Endothelial cell of umbilical vein (primary cell): ENCODE measurements at regions of chr2 and their contacts with region 1.

Region 1: DNA sequence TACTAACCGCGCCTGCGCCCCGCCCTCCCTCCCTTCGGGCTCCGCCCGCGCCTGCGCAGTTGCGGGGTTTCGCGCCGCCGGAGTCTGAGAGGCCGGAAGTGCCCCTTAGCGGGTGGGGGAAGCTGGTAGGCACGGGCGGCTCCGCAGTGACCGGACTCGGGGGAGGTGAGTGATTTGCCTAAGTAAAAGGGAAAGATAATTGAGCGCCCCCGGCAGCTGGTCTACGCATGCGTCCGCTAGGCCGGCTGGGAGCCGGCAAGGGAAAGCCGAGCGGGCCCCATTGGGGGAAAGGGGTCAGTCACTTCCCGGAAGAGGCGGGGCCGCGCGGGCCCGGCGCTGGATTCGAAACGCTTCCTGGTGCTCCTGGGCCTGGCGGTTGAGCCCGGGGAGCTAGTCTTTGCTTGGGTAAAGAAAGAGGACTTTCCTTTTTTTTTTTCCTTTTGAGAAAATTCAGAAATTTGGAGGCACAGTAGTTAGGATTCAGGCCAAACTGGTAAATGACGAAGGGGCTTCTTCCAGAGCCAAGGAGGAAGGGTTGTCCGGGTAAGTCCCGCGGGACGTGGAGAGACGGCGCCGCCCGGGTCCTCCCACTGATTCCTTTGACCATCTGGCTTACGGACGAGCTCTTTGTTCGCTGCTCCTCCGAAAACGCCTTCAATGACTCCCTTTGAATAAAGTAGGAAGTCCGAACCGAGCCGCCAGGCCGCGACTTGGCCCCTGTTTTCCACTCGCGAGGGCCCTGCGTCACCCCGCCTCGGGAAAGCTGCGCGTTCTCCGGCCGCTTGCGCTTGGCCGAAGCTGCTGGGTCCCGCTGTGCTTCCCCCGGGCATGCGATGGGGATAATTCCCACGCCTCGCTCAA is at the starts of genes GEN1 and SMC6:
- DNase-seq: peak; percentile 94
- H3K4me3 ChIP-seq: peak within 1 kb of the TSS; percentile 74 to 96 (median 81)
- H3K27ac ChIP-seq: peak within 1 kb of the TSS; percentile 88
- H3K4me1 ChIP-seq: peaks cover 47% of the 10 kb centered on the region
- H3K27me3 ChIP-seq: no peaks in the 10 kb centered on the region
- CTCF ChIP-seq: no peak
- POLR2A ChIP-seq: peak; percentile 12
- total RNA-seq, gene GEN1: 20.8 and 29.6 TPM in 2 replicates
- total RNA-seq, gene SMC6: 35.4 and 38.3 TPM in 2 replicates

Region 2: GRCh38 chr2:17719562-17720371 is 34.3 kb before region 1 on chr2:
- CTCF ChIA-PET with region 1: interaction called, 11 read pairs
- POLR2A ChIA-PET with region 1: interaction called, 5 read pairs
- dilution Hi-C with region 1: no loop called
- intact Hi-C with region 1: loop called (anchors 1 kb)
- DNase-seq: peak; percentile 79
- H3K4me3 ChIP-seq: no peak overlapping the region
- H3K27ac ChIP-seq: no peak overlapping the region
- H3K4me1 ChIP-seq: no peaks in the 10 kb centered on the region
- H3K27me3 ChIP-seq: no peaks in the 10 kb centered on the region
- CTCF ChIP-seq: peak; percentile 46 to 49
- POLR2A ChIP-seq: no peak

Region 3: DNA sequence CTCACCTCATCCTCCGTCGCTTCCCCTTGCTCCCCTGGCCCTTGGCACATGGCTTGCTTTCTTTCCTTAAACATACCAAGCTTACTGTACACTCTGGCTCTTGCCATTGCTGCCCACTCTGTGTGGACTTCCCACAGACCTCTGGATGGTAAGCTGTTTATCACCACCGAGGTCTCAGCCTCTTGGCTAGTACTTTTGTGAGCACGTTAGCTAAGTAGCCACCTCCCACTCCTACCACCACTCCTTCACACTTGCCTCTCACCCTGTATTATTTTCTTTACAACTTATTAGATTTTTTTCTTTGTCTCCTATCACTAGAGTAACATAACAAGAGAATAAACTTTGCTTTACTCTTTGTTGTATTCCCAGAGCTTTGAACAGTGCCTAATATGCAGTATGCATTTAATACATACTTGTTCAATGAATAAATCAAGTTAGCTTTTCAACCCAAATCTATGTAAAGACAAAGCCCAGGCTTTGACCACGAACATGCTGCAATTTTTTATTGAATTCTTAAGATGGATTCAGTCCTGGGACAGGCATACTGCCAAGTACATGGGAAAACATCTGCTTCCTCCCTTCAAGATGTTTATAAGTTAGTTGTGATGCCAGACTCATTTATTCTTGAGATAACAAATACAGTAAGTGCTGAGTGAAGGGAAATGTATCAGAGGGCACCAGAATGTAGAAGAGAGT is 37.2 kb after region 1 on chr2:
- CTCF ChIA-PET with region 1: no interaction called
- POLR2A ChIA-PET with region 1: no interaction called
- dilution Hi-C with region 1: no loop called
- intact Hi-C with region 1: loop called (anchors 1 kb)
- DNase-seq: peak; percentile 97
- H3K4me3 ChIP-seq: no peak overlapping the region
- H3K27ac ChIP-seq: no peak overlapping the region
- H3K4me1 ChIP-seq: no peaks in the 10 kb centered on the region
- H3K27me3 ChIP-seq: peaks cover 3 to 10% of the 10 kb centered on the region in 2 experiments
- CTCF ChIP-seq: no peak
- POLR2A ChIP-seq: no peak

Region 4: GRCh38 chr2:17867133-17867532 is 113.1 kb after region 1 on chr2:
- CTCF ChIA-PET with region 1: no interaction called
- POLR2A ChIA-PET with region 1: no interaction called
- dilution Hi-C with region 1: no loop called
- intact Hi-C with region 1: no loop called
- DNase-seq: no peak
- H3K4me3 ChIP-seq: no peak overlapping the region
- H3K27ac ChIP-seq: no peak overlapping the region
- H3K4me1 ChIP-seq: no peaks in the 10 kb centered on the region
- H3K27me3 ChIP-seq: no peaks in the 10 kb centered on the region
- CTCF ChIP-seq: no peak
- POLR2A ChIP-seq: no peak

Region 5: DNA sequence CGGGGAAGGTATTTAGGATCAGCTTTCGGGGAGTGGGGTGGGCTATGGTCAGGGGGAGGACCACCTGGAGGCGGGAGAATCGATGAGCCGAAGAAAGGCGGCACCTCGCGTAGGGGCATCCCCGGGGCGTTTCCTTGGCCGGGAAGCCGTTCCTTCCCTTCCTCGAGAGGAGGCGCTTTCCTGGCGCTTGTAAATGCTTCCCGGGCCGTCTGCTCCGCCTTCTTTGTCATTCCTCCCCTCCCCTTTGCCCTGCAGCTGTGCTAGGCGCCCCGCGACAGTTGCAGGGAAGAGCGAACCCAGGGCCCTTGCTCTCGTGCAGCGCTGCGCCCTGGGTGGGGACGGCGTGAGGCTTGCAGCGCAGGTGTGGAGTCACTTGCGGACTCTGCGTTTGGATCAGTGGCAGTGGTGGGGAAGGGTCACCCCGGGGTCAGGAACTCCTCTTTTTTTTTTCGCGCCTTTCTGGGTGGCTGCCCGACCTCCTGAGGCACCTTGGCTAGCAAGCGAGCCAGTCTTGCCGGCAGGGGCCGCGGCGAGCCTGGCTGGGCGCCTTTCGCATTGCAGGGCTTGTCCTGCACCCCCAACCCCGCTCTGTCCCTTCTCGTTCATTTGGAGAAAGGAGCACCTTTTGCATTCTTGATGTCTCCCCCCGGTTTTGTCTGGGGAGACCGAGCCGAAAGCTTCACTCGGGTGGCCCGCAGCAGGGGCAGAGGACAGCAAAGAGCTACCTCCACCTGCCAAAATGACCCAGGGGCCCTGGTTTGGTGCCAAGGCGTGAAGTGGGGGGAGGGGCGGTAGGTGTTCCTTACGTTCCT is 125.3 kb after region 1 on chr2:
- CTCF ChIA-PET with region 1: interaction called, 3 read pairs
- POLR2A ChIA-PET with region 1: no interaction called
- dilution Hi-C with region 1: no loop called
- intact Hi-C with region 1: loop called (anchors 2 kb)
- DNase-seq: peak; percentile 7
- H3K4me3 ChIP-seq: peak overlapping the region in 2 of 3 experiments; percentile 6 to 43
- H3K27ac ChIP-seq: no peak overlapping the region
- H3K4me1 ChIP-seq: peaks cover 4% of the 10 kb centered on the region
- H3K27me3 ChIP-seq: peaks cover 21 to 50% of the 10 kb centered on the region in 2 experiments
- CTCF ChIP-seq: peak in 1 of 2 donors; percentile 5
- POLR2A ChIP-seq: no peak

Region 6: DNA sequence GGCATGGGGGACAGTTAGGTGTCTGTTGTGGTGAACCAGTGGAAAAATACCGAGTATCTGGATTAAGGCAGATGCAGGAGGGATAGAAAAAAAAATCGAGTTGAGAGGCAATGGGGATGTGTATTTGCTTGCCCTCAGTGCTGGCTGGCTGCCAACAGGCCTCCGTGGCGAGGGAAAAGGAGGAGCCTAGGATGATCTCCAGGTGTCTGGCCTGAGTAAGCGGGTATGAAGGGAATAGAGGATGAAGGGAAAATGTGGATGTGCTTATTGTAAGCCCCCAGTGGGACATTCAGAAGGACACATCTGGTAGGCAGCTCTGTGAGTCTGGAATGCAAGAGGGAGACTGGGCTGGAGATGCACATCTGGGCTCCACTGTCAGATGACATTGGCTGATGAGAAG is 147.2 kb after region 1 on chr2:
- CTCF ChIA-PET with region 1: no interaction called
- POLR2A ChIA-PET with region 1: no interaction called
- dilution Hi-C with region 1: no loop called
- intact Hi-C with region 1: no loop called
- DNase-seq: no peak
- H3K4me3 ChIP-seq: no peak overlapping the region
- H3K27ac ChIP-seq: no peak overlapping the region
- H3K4me1 ChIP-seq: no peaks in the 10 kb centered on the region
- H3K27me3 ChIP-seq: no peaks in the 10 kb centered on the region
- CTCF ChIP-seq: no peak
- POLR2A ChIP-seq: no peak